PC-3 (cell line): ENCODE measurements at regions of chr1 and their contacts with region 1.

Region 1: GRCh38 chr1:244864253-244865027 is at the start of gene HNRNPU:
- DNase-seq: peak; percentile 99
- ATAC-seq: peak; percentile 74
- H3K4me3 ChIP-seq: peak within 1 kb of the TSS; percentile 80
- H3K27ac ChIP-seq: peak within 1 kb of the TSS; percentile 72
- H3K4me1 ChIP-seq: peaks cover 24% of the 10 kb centered on the region
- H3K27me3 ChIP-seq: no peaks in the 10 kb centered on the region
- CTCF ChIP-seq: no peak; the same call in 1 of the 2 replicates
- total RNA-seq, gene HNRNPU: 431 and 503 TPM in 2 replicates

Region 2: DNA sequence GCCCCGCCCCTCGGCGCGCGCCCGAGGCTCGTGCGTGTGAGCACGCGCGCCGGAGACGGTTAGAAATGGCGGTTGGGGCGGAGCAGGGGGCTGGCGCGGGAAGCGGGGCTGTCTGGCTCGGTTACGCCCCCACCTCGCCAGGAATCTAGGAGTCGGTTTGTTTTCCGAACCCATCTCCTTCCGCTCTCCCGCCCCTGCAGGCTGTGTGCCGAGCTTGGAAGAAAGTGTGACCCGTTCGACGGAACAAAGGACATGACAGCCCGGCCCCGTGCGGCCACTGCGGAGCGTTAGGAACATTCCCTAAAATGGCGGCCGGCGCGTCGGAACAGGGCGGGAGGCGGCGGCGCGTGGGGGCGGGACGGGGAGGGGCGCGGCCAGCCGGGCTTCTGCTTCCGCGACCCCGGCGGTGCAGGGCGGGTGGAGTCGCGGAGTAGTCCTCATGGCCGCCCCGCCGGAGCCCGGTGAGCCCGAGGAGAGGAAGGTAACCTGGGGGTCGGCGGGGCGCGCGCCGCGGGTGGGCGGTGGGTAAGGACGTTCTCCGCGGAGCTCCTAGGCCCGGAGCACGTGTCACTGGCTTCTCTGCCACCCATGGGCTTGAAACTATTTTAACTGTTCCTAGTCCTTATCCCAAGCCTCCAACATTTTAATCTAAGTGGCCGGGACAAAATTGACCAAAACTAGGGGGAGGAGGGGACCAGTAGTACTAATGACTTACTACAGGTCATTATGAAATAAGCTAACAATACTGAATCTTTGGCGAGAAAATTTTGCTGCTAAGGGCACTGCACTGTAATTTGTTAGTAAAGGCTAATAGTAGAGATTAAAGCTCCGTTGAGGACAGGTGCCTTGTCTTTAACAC is 28.9 kb before region 1 on chr1 and contains the start of gene COX20:
- CTCF ChIA-PET with region 1: no interaction called
- POLR2A ChIA-PET with region 1: interaction called, 8 read pairs
- intact Hi-C with region 1: loop called (anchors 1 kb)
- DNase-seq: peak; percentile 95
- ATAC-seq: peak; percentile 59
- H3K4me3 ChIP-seq: peak within 1 kb of the TSS; percentile 94
- H3K27ac ChIP-seq: peak within 1 kb of the TSS; percentile 91
- H3K4me1 ChIP-seq: peaks cover 47% of the 10 kb centered on the region
- H3K27me3 ChIP-seq: no peaks in the 10 kb centered on the region
- CTCF ChIP-seq: no peak
- total RNA-seq, gene COX20: 50.0 and 55.8 TPM in 2 replicates

Region 3: DNA sequence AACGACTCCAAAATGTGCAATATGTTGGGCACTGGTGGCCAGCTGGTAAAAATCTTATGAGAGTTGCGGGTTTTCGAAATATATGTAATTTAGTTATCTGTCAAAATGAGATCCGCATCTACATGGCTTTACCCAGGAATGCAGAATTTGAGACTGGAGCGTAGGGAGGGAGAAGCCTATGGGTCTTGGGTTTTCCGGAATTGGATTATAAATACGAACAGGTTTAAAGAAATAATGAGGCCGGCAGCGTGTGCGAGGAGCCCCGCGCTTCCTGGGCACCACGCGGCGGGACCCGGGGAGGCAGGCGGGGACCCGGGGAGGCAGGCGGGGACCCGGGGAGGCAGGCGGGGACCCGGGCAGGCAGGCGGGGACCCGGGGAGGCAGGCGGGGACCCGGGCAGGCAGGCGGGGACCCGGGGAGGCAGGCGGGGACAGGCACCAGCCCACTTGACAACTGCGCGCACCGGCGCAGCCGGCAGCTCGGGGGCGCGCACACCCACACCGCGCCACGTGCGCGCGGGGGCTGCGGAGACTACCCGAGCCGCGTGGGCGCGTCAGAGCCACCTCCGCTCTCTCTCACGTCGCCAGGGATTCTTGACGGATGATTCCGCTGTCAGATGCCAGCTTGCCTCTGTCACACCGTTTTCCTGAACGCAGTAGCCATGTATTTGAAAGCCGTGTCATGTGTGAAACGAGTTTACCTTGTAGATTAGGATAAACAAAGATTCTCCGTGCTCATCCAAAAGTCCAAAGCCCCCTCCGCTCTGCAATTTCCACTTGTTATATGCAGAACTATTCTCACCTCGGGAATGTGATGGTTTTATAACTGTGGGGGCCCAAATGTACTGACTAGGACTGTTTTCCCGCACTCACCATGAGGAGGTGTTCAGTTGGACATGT is 54.2 kb after region 1 on chr1:
- CTCF ChIA-PET with region 1: no interaction called
- POLR2A ChIA-PET with region 1: interaction called, 6 read pairs
- intact Hi-C with region 1: loop called (anchors 5 kb)
- DNase-seq: peak; percentile 57
- ATAC-seq: peak; percentile 76
- H3K4me3 ChIP-seq: peak overlapping the region; percentile 73
- H3K27ac ChIP-seq: no peak overlapping the region
- H3K4me1 ChIP-seq: peaks cover 5% of the 10 kb centered on the region; the same call in 1 of the 2 replicates
- H3K27me3 ChIP-seq: no peaks in the 10 kb centered on the region
- CTCF ChIP-seq: no peak; the same call in 1 of the 2 replicates

Region 4: DNA sequence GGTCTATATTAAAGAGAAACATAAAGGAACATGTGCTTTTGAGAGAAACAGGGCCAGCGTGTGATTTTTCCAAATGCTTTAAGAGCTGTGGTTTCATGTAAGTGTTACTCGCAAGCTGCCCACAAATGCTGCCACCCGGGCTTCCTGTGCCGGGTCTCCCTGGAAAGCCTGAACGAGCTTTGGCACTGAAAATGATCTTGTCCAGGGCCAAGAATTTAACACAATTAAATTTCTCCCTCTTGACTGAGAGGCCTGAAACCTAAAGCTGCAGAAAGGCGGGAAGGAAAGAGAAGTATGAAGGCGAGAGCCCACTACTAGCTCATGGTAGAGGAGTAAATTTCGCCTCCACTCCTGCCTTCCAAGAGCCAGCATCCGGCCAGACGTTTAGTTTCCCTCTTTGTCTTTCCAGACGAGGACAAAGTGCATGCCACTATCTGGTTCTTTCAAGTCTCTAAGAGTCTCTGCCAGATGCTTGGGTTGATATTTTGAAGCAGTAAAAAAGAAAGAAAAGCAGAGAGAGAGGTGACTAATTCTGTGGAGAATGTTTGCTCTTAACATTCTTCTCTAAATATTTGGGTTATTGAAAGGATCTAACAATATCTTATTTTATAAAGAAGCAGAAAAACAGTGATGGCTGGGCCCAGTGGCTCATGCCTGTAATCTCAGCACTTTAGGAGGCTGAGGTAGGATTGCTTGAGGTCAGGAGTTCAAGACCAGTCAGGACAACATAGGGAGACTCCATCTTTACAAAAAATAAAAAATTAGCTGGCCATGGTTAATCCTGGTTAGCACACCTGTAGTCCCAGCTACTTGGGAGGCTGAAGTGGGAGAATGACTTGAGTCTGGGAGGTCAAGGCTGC is 99.9 kb after region 1 on chr1:
- CTCF ChIA-PET with region 1: interaction called, 4 read pairs
- POLR2A ChIA-PET with region 1: interaction called, 16 read pairs
- intact Hi-C with region 1: loop called (anchors 1 kb)
- DNase-seq: peak; percentile 90
- ATAC-seq: peak; percentile 88
- H3K4me3 ChIP-seq: peak overlapping the region; percentile 51
- H3K27ac ChIP-seq: peak overlapping the region; percentile 85
- H3K4me1 ChIP-seq: peaks cover 39% of the 10 kb centered on the region
- H3K27me3 ChIP-seq: no peaks in the 10 kb centered on the region
- CTCF ChIP-seq: no peak

Region 5: GRCh38 chr1:244970661-244971551 is 106.5 kb after region 1 on chr1:
- CTCF ChIA-PET with region 1: interaction called, 4 read pairs
- POLR2A ChIA-PET with region 1: interaction called, 15 read pairs
- intact Hi-C with region 1: loop called (anchors 1 kb)
- DNase-seq: peak; percentile 96
- ATAC-seq: peak; percentile 66
- H3K4me3 ChIP-seq: peak overlapping the region; percentile 74
- H3K27ac ChIP-seq: peak overlapping the region; percentile 95
- H3K4me1 ChIP-seq: peaks cover 17% of the 10 kb centered on the region
- H3K27me3 ChIP-seq: no peaks in the 10 kb centered on the region
- CTCF ChIP-seq: peak; percentile 65